ENCODE measurements at regions of chr1 and their contacts with region 1.

Region 1: DNA sequence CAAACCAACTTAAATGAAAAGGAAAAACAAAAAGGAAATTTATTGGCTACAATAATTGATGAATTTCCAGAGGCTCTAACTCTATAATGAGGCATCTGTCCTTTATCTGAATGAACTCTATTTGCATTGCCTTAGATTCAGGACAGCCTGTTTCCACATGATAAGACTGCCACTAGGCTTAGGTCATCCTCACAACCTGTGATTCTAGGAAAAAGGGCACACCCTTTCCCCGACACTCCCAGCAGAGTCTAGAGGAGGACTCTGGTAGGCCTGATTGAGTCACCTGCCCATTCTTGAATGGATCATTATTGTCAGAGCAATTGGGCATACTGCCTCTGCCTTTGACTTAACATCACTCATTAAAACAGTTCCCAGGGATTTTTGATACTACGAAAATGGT is 262.8 kb downstream of the TPR start:
- DNase-seq: no peak
- ATAC-seq: no peak
- H3K4me3 ChIP-seq: no peak overlapping the region
- H3K27ac ChIP-seq: no peak overlapping the region
- H3K4me1 ChIP-seq: no peaks in the 10 kb centered on the region
- H3K27me3 ChIP-seq: no peaks in the 10 kb centered on the region
- CTCF ChIP-seq: no peak
- EP300 ChIP-seq: no peak
- POLR2A ChIP-seq: no peak
- RAD21 ChIP-seq: no peak

Region 2: GRCh38 chr1:185790194-185790735 is 322.0 kb before region 1 on chr1:
- CTCF ChIA-PET with region 1: no interaction called
- POLR2A ChIA-PET with region 1: no interaction called
- in situ Hi-C with region 1: no loop called
- intact Hi-C with region 1: no loop called
- DNase-seq: no peak
- ATAC-seq: no peak
- H3K4me3 ChIP-seq: no peak overlapping the region
- H3K27ac ChIP-seq: no peak overlapping the region
- H3K4me1 ChIP-seq: no peaks in the 10 kb centered on the region
- H3K27me3 ChIP-seq: no peaks in the 10 kb centered on the region
- CTCF ChIP-seq: no peak
- EP300 ChIP-seq: no peak
- POLR2A ChIP-seq: no peak
- RAD21 ChIP-seq: no peak

Region 3: GRCh38 chr1:186059312-186059711 is 53.0 kb before region 1 on chr1:
- CTCF ChIA-PET with region 1: no interaction called
- POLR2A ChIA-PET with region 1: no interaction called
- in situ Hi-C with region 1: no loop called
- intact Hi-C with region 1: no loop called
- DNase-seq: no peak
- ATAC-seq: no peak
- H3K4me3 ChIP-seq: no peak overlapping the region
- H3K27ac ChIP-seq: no peak overlapping the region
- H3K4me1 ChIP-seq: no peaks in the 10 kb centered on the region
- H3K27me3 ChIP-seq: no peaks in the 10 kb centered on the region
- CTCF ChIP-seq: no peak
- EP300 ChIP-seq: no peak
- POLR2A ChIP-seq: no peak
- RAD21 ChIP-seq: no peak

Region 4: GRCh38 chr1:186178426-186179043 is 66.3 kb after region 1 on chr1:
- CTCF ChIA-PET with region 1: no interaction called
- POLR2A ChIA-PET with region 1: no interaction called
- in situ Hi-C with region 1: no loop called
- intact Hi-C with region 1: loop called (anchors 2 kb)
- DNase-seq: no peak
- ATAC-seq: no peak
- H3K4me3 ChIP-seq: no peak overlapping the region
- H3K27ac ChIP-seq: no peak overlapping the region
- H3K4me1 ChIP-seq: no peaks in the 10 kb centered on the region
- H3K27me3 ChIP-seq: no peaks in the 10 kb centered on the region
- CTCF ChIP-seq: no peak
- EP300 ChIP-seq: no peak
- POLR2A ChIP-seq: no peak
- RAD21 ChIP-seq: no peak